Endothelial cell of umbilical vein (primary cell): ENCODE measurements at regions of chr1 and their contacts with region 1.

Region 1: DNA sequence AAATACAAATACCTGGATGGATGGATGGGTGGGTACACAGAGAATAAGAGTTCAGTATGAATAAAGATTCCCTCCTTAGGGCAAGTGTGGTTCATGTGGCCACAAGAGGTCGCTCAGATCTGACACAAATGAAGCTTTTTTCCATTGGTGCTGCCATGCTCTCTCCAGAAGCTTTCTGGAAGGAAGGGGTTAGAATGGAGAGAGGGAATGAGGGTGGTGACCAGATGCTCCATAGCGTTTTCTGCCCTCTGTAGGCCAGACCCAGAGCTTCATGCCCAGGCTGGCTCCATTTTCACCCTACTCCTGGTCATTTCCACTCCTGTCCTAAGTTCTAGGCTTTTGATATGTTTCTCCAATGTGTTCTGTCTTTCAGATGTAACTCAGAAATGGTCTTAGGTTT is 3.3 kb upstream of the FCRL6 start:
- DNase-seq: peak; percentile 85
- H3K4me3 ChIP-seq: no peak overlapping the region
- H3K27ac ChIP-seq: no peak overlapping the region
- H3K4me1 ChIP-seq: no peaks in the 10 kb centered on the region
- H3K27me3 ChIP-seq: no peaks in the 10 kb centered on the region
- CTCF ChIP-seq: peak; percentile 75 to 77
- POLR2A ChIP-seq: no peak

Region 2: DNA sequence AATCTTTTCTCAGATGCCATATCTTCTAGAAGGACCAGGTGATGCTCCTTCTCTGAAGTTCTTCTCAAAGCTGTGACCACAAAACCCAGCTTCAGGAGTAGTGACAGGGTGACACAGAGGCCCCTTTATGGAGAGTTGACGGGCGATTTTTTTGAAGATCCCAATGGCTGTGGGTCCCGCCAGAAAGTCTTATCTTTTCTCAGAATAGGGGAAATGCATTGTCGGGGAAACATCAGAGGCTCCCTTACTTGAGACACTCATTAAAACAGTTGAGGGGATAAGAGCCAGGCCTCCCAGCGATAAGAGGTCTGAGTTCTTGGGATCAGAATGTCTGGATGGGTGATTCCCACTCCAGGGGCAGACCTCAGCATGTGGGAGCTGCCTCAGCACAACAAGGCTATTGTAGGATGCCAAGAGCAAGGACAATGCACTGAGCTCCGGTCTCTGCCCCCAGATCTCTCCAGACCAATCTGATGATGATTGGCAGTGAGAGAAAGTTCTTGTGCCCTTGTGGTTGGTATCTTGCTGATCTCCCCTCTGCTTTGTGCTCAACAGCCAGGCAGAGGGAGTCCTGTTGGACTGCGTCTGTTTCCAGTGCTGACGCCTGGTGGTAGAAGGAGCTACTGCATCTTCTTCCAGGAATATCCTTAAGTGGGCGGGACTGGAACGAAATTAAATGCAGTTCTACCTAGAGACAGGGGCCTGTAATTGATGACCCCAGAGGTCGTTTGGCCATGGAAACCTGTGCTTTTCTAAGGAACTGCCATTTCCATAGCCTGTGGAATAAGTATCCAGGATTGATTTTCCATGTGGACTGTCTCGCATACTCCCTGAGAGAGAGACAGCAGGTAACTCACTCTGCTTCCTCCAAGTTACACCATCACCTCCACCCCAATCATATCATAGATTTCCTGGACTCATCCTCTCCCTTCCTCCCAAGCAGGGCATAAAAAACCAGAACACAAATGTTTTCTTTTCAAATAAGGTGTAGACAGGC is 601.0 kb before region 1 on chr1:
- CTCF ChIA-PET with region 1: interaction called, 20 read pairs
- POLR2A ChIA-PET with region 1: no interaction called
- dilution Hi-C with region 1: no loop called
- intact Hi-C with region 1: no loop called
- DNase-seq: peak; percentile 81
- H3K4me3 ChIP-seq: no peak overlapping the region
- H3K27ac ChIP-seq: no peak overlapping the region
- H3K4me1 ChIP-seq: no peaks in the 10 kb centered on the region
- H3K27me3 ChIP-seq: no peaks in the 10 kb centered on the region
- CTCF ChIP-seq: peak; percentile 85 to 87
- POLR2A ChIP-seq: no peak

Region 3: GRCh38 chr1:159775716-159776115 is 23.2 kb before region 1 on chr1:
- CTCF ChIA-PET with region 1: interaction called, 65 read pairs
- POLR2A ChIA-PET with region 1: no interaction called
- dilution Hi-C with region 1: no loop called
- intact Hi-C with region 1: loop called (anchors 1 kb)
- DNase-seq: peak; percentile 46
- H3K4me3 ChIP-seq: no peak overlapping the region
- H3K27ac ChIP-seq: peak overlapping the region; percentile 9
- H3K4me1 ChIP-seq: peaks cover 53% of the 10 kb centered on the region
- H3K27me3 ChIP-seq: no peaks in the 10 kb centered on the region
- CTCF ChIP-seq: no peak
- POLR2A ChIP-seq: peak; percentile 49

Region 4: DNA sequence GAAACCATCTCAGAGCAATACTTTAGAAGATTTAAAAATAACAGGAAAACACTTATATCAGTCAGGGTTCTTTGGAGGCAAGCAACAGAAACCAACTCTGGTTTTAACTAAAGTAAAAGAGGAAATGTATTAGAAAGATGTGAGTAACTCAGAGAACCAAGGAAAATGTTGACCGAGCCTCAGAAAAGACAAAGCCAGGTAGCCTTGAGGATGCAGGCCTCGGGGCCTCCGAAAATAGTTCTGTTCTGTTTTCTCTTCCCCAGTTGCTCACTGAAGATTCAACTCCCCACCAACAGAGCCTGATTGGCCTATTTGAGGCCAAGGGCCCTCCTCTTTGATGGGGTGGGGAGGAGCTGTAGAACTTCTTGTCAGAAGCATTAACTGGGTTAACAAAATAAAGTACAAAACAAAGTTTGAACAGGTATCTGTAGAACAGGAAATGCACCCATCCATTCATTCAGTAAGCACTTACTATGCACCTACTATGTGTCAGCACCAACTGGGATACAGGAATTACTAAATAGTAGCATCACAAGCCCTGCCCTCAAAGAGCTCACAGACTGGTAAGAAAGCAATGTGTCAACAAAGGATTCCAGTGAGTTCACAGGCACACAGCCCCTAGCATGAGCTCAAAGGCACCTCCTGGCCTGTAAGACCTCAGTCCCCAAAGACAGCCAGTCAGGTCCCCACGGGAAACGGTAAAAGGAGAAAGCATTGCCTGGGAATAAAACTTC is 40.4 kb after region 1 on chr1:
- CTCF ChIA-PET with region 1: interaction called, 71 read pairs
- POLR2A ChIA-PET with region 1: no interaction called
- dilution Hi-C with region 1: no loop called
- intact Hi-C with region 1: no loop called
- DNase-seq: no peak
- H3K4me3 ChIP-seq: no peak overlapping the region
- H3K27ac ChIP-seq: no peak overlapping the region
- H3K4me1 ChIP-seq: no peaks in the 10 kb centered on the region
- H3K27me3 ChIP-seq: no peaks in the 10 kb centered on the region
- CTCF ChIP-seq: no peak
- POLR2A ChIP-seq: no peak

Region 5: DNA sequence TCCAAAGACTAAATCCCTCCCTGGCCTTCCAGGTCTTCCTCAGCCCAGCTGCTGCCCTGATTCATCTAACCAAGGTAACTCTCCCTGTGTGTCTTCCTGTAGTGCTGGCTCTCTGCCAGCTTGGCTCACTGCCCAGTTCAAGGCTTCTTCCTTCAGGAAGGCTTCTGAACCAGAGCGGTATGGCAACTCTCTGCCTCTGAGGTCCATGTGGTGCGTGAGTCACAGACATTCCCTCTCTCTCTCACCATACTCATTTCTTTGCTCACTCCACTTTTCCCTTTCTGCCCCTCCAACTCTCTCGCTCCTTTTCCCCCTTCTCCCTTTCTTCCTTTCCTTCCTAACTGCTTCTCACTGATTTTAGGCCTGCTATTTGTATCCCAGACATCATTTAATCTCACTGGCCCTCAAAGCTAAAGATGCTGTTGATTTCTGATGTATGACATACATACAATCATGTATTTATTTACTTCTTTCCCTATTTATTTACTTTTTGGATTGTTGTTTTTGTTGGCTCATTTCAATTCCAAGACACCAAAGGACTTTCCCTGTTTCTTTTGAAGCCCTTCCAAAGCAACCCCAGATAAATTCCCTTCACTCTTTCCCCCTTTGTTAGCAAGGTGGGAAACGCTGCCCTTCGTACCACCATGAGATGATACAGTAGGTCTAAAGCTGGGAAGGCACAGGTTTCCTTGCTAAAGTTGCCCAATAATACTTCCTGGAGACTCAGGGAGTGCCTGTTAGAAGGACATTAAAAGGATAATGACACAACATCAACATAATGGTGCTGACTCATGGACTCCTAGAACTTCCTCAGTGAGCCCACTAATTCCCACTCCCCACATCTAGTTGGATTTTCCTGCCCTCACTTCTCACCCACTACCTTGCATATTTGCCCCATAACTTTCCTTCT is 83.3 kb after region 1 on chr1:
- CTCF ChIA-PET with region 1: interaction called, 31 read pairs
- POLR2A ChIA-PET with region 1: no interaction called
- dilution Hi-C with region 1: no loop called
- intact Hi-C with region 1: no loop called
- DNase-seq: peak; percentile 89
- H3K4me3 ChIP-seq: no peak overlapping the region
- H3K27ac ChIP-seq: peak overlapping the region; percentile 70
- H3K4me1 ChIP-seq: peaks cover 16% of the 10 kb centered on the region
- H3K27me3 ChIP-seq: no peaks in the 10 kb centered on the region
- CTCF ChIP-seq: no peak
- POLR2A ChIP-seq: peak; percentile 40

Region 6: DNA sequence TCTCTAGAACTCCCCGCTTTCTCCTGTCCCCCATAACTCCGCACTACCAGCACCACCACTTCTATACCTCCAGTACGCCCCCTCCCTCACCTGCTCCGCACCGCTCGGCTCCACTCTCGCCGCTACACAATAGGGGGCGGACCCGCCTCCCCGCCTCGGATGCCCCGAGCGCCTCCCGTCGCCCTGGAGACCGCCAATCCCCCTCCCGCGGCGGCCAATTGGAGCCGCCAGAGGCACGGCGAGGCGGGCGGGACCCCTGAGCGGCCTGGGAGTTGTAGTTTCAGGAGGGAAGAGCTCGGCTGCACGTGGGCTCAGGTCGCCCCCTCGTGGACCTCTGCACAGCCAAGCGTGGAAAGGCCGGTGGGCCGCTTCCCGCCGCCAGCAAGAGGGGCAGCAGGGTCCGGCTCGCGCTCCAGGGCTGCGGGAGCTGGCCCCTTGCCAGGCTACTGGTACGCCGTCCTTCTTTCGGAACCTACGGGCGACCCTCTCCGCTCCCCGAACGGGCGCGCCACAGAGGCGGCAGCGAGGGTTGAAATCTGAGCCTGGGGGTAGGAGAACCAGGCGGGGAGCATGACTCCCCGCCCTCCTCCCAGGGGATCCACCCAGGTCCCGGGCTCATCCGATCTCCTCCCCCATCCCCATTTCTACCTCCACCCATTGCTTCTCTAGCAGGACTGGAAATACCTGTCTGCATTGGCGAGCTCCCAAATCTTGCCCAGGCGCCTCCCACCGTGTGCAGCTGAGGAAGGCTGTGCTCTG is 146.8 kb after region 1 on chr1 and contains the start of gene IGSF9:
- CTCF ChIA-PET with region 1: interaction called, 12 read pairs
- POLR2A ChIA-PET with region 1: no interaction called
- dilution Hi-C with region 1: no loop called
- intact Hi-C with region 1: no loop called
- DNase-seq: peak; percentile 85
- H3K4me3 ChIP-seq: peak within 1 kb of the TSS in 2 of 3 experiments; percentile 15 to 16
- H3K27ac ChIP-seq: no peak within 1 kb of the TSS
- H3K4me1 ChIP-seq: peaks cover 5% of the 10 kb centered on the region
- H3K27me3 ChIP-seq: peaks cover 22 to 36% of the 10 kb centered on the region in 2 experiments
- CTCF ChIP-seq: peak; percentile 47 to 72
- POLR2A ChIP-seq: no peak
- total RNA-seq, gene IGSF9: 0.15 and 0.16 TPM in 2 replicates